HCT116 (cell line): ENCODE measurements at regions of chr2 and their contacts with region 1.

Region 1: GRCh38 chr2:636641-637405 is 40.4 kb downstream of the TMEM18 start:
- DNase-seq: peak; percentile 47
- ATAC-seq: peak; percentile 77
- H3K4me3 ChIP-seq: no peak overlapping the region
- H3K27ac ChIP-seq: no peak overlapping the region
- H3K4me1 ChIP-seq: peaks cover 0 to 14% of the 10 kb centered on the region in 2 experiments; a peak in 2 of 4 replicates
- H3K27me3 ChIP-seq: no peaks in the 10 kb centered on the region
- CTCF ChIP-seq: peak; percentile 76 to 83 (median 80)
- POLR2A ChIP-seq: no peak
- RAD21 ChIP-seq: peak; percentile 89

Region 2: DNA sequence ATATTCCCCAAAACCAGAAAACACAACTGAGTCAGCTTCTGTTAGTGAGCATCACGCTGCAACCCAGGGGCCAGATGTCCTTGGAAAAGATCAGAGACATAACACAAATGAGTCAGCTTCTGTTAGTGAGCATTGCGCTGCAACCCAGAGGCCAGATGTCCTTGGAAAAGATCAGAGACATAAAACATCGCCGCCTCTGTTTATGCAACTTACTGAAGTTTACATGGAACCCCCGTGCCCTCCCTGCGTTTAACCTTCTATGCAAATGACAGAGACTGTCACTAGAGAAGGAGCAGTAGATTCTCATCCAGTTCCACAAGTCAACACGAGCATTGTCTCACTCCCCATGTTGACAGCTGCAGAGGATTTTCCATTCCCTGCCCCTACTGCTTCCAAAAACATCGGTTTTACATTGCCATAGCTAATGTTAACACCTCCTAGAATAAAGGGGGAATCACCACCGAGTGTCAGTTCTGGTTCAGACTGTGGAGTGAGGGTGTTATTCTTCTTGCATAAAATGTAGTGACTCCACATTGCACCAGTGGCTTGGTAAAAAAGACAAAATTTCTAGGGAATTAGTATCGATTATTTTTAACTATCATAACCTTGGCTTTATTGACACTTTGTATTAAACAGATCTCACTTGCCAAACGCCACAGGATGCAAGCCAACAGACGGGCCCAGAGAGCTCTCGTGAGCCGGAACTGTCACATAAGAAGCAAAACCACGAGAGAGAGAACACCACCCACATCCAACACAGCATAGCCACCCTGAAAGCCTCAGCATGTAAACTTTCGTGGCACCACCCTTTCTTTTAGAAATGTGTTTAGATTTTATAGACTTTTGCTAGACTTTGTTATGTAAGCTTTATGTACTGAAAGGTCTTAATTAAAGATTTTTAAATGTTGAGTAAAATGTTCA is 460.7 kb before region 1 on chr2:
- CTCF ChIA-PET with region 1: no interaction called
- POLR2A ChIA-PET with region 1: no interaction called
- RAD21 ChIA-PET with region 1: no interaction called
- intact Hi-C with region 1: loop called (anchors 1 kb)
- DNase-seq: no peak
- ATAC-seq: no peak
- H3K4me3 ChIP-seq: no peak overlapping the region
- H3K27ac ChIP-seq: no peak overlapping the region
- H3K4me1 ChIP-seq: peaks cover 0 to 5% of the 10 kb centered on the region in 2 experiments; a peak in 1 of 4 replicates
- H3K27me3 ChIP-seq: no peaks in the 10 kb centered on the region; the same call in 1 of the 2 replicates
- CTCF ChIP-seq: no peak
- POLR2A ChIP-seq: no peak
- RAD21 ChIP-seq: no peak

Region 3: GRCh38 chr2:246489-247144 is 390.2 kb before region 1 on chr2:
- CTCF ChIA-PET with region 1: interaction called, 4 read pairs
- POLR2A ChIA-PET with region 1: no interaction called
- RAD21 ChIA-PET with region 1: no interaction called
- intact Hi-C with region 1: loop called (anchors 5 kb)
- DNase-seq: peak; percentile 36
- ATAC-seq: peak; percentile 87
- H3K4me3 ChIP-seq: no peak overlapping the region
- H3K27ac ChIP-seq: no peak overlapping the region
- H3K4me1 ChIP-seq: no peaks in the 10 kb centered on the region
- H3K27me3 ChIP-seq: no peaks in the 10 kb centered on the region
- CTCF ChIP-seq: peak; percentile 31 to 65 (median 58); a peak in 5 of 6 replicates
- POLR2A ChIP-seq: no peak
- RAD21 ChIP-seq: peak; percentile 35; the same call in 1 of the 2 replicates

Region 4: GRCh38 chr2:529425-529824 is 107.4 kb before region 1 on chr2:
- CTCF ChIA-PET with region 1: interaction called, 19 read pairs
- POLR2A ChIA-PET with region 1: no interaction called
- RAD21 ChIA-PET with region 1: interaction called, 3 to 4 read pairs
- intact Hi-C with region 1: loop called (anchors 1 kb)
- DNase-seq: peak; percentile 74
- ATAC-seq: peak; percentile 98
- H3K4me3 ChIP-seq: no peak overlapping the region
- H3K27ac ChIP-seq: no peak overlapping the region
- H3K4me1 ChIP-seq: 0 out of 4 replicates have a peak, but pooled peaks cover 2 to 4% of the 10 kb centered on the region in 2 experiments
- H3K27me3 ChIP-seq: no peaks in the 10 kb centered on the region
- CTCF ChIP-seq: peak; percentile 49 to 92 (median 54)
- POLR2A ChIP-seq: no peak
- RAD21 ChIP-seq: peak; percentile 86

Region 5: DNA sequence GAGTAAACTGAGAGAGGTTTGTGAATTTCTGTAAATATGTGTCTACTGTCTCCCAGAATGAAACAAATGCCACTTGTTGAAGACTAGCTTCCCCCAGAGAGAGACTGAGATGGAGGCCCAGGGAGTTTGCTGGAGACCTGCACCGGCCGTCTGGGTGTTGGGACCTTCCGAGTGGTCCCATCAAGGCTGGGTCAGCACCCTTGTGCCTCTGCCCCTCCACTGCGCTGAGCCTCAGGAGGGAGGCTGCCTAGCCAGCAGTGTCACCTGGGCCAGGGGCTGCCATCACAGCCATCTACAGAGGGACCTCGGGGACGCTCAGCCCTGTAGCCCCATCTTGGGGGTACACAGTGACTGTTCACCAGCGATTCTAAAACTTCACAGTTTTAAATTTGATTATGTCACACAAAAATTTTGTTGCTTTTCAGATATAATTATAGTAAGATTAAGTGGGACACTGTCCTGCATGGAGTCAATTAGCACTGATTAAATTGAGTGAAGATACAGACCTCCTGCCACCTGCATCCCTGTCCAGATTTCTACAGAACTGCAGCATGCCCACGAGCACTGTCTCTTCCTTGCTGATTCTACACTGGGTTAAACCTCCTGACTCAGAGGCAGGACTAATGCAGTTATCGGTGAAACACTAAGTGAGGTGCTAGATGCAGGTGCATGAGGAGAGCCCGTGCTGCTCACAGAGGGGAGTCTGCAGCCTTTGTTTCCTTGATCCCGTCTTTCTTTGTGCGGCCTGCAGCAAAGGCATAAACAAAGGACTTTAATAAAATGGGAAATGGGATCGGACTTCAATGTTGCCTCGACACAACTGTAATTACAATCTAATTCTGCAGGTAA is 10.1 kb before region 1 on chr2:
- CTCF ChIA-PET with region 1: no interaction called
- POLR2A ChIA-PET with region 1: no interaction called
- RAD21 ChIA-PET with region 1: no interaction called
- intact Hi-C with region 1: no loop called
- DNase-seq: no peak
- ATAC-seq: no peak
- H3K4me3 ChIP-seq: no peak overlapping the region
- H3K27ac ChIP-seq: no peak overlapping the region
- H3K4me1 ChIP-seq: no peaks in the 10 kb centered on the region
- H3K27me3 ChIP-seq: no peaks in the 10 kb centered on the region
- CTCF ChIP-seq: no peak
- POLR2A ChIP-seq: no peak
- RAD21 ChIP-seq: no peak